AG04449 (cell line): ENCODE measurements at regions of chr4 and their contacts with region 1.

Region 1: GRCh38 chr4:120718979-120719566 is 203.5 kb downstream of the PRDM5 start:
- DNase-seq: peak; percentile 10
- H3K4me3 ChIP-seq: no peak overlapping the region
- CTCF ChIP-seq: peak; percentile 72

Region 2: GRCh38 chr4:120589787-120590186 is 129.3 kb before region 1 on chr4:
- CTCF ChIA-PET with region 1: no interaction called
- POLR2A ChIA-PET with region 1: no interaction called
- DNase-seq: no peak
- H3K4me3 ChIP-seq: no peak overlapping the region
- CTCF ChIP-seq: no peak

Region 3: GRCh38 chr4:120658772-120659171 is 60.3 kb before region 1 on chr4:
- CTCF ChIA-PET with region 1: no interaction called
- POLR2A ChIA-PET with region 1: no interaction called
- DNase-seq: no peak
- H3K4me3 ChIP-seq: no peak overlapping the region
- CTCF ChIP-seq: no peak

Region 4: DNA sequence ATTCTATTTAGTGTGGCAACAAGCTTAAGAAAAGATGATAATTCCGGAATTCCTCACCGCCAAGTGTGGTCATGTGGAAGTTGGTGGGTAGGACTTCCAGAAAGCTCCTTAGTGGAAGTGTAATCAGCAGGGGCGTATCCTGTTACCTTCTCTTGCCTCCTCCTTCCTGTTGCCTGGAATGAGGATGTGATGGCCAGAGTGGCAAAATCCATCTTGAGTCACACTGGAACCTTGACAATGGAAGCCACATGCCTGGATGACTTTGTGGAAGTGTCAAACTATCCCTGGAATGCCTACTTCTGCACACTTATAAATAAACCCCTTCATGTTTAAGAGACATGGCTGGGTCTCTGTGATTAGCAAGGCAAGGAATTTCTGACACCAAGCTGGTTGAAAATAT is 12.5 kb after region 1 on chr4:
- CTCF ChIA-PET with region 1: interaction called, 10 read pairs
- POLR2A ChIA-PET with region 1: no interaction called
- DNase-seq: no peak
- H3K4me3 ChIP-seq: no peak overlapping the region
- CTCF ChIP-seq: no peak

Region 5: GRCh38 chr4:120977435-120977997 is 258.4 kb after region 1 on chr4:
- CTCF ChIA-PET with region 1: interaction called, 32 read pairs
- POLR2A ChIA-PET with region 1: no interaction called
- DNase-seq: peak; percentile 29
- H3K4me3 ChIP-seq: no peak overlapping the region
- CTCF ChIP-seq: peak; percentile 74